ENCODE measurements at regions of chr6 and their contacts with region 1.

Region 1: GRCh38 chr6:108294727-108295625 is at the start of gene AFG1L:
- DNase-seq: peak; percentile 74
- ATAC-seq: peak; percentile 94
- H3K4me3 ChIP-seq: peak within 1 kb of the TSS; percentile 76
- H3K27ac ChIP-seq: peak within 1 kb of the TSS; percentile 99
- H3K4me1 ChIP-seq: no peaks in the 10 kb centered on the region; the same call in 1 of the 2 replicates
- H3K27me3 ChIP-seq: no peaks in the 10 kb centered on the region
- CTCF ChIP-seq: no peak
- EP300 ChIP-seq: no peak; a peak in 1 of 4 replicates
- POLR2A ChIP-seq: peak; percentile 85
- RAD21 ChIP-seq: no peak
- polyA plus RNA-seq, gene AFG1L: 2.4 to 3.6 TPM

Region 2: DNA sequence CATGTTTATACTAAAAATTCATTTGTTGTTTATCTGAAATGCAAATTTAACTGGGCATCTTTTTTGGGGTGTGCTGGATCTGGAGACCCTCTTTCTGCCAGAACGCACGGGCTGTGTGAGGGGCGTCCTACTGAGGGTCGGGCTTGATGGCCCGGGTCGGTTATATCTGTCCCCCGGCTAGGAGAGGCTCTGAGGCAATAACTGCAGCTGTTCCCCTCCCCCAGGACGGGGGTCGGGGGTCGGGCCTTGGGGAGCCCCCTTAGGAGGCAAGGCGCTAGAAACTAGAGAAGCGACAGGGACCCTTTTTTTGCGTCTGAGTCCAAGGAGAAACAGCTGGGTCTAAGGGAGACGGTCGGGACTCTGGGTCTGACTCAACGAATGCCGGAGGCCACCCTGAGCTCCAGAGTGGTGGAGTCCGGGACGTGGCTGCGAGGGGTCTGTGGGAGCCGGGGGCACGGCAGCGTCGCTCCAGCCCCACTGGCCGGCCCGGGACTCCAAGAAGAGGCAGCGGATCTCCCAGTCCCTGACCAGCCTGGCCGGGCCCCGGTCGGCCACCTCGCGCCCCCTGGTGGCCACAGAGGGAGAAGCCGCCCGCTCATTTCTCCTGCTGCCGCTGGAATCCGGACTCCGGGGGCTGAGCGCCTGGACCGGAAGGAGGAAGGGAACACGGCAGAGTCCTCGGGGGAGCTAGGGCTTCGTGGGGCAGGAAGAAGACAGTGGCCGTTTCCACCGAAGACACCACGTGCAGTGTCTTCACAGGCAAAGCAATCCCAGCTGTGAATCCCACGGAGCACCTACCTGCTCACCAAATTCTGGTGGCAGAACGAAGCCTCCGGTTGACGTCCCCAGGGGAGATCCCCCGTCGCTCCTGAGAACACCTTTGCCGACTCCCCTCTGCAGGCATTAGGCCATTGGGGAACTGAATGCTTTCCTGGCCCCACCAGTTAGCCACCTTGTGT is 446.9 kb before region 1 on chr6:
- CTCF ChIA-PET with region 1: no interaction called
- POLR2A ChIA-PET with region 1: no interaction called
- RAD21 ChIA-PET with region 1: no interaction called
- SMC1A ChIA-PET with region 1: no interaction called
- in situ Hi-C with region 1: no loop called
- intact Hi-C with region 1: no loop called
- DNase-seq: no peak
- ATAC-seq: peak; percentile 98
- H3K4me3 ChIP-seq: peak overlapping the region; percentile 24; the same call in 1 of the 2 replicates
- H3K27ac ChIP-seq: no peak overlapping the region
- H3K4me1 ChIP-seq: no peaks in the 10 kb centered on the region
- H3K27me3 ChIP-seq: peaks cover 1 to 3% of the 10 kb centered on the region in 2 experiments
- CTCF ChIP-seq: peak; percentile 83 to 92 (median 85)
- EP300 ChIP-seq: no peak
- POLR2A ChIP-seq: no peak
- RAD21 ChIP-seq: peak; percentile 65

Region 3: GRCh38 chr6:108348655-108349349 is 53.8 kb after region 1 on chr6:
- CTCF ChIA-PET with region 1: no interaction called
- POLR2A ChIA-PET with region 1: no interaction called
- RAD21 ChIA-PET with region 1: interaction called, 3 read pairs
- SMC1A ChIA-PET with region 1: interaction called, 5 read pairs
- in situ Hi-C with region 1: no loop called
- intact Hi-C with region 1: loop called (anchors 2 kb)
- DNase-seq: peak; percentile 77
- ATAC-seq: peak; percentile 95
- H3K4me3 ChIP-seq: peak overlapping the region; percentile 4; the same call in 1 of the 2 replicates
- H3K27ac ChIP-seq: peak overlapping the region; percentile 94
- H3K4me1 ChIP-seq: peaks cover 22% of the 10 kb centered on the region
- H3K27me3 ChIP-seq: no peaks in the 10 kb centered on the region
- CTCF ChIP-seq: no peak
- EP300 ChIP-seq: peak; percentile 59 to 92; a peak in 3 of 4 replicates
- POLR2A ChIP-seq: no peak
- RAD21 ChIP-seq: no peak